ENCODE measurements at regions of chr2 and their contacts with region 1.

Region 1: GRCh38 chr2:64750817-64751285 is 97.1 kb upstream of the SERTAD2 start:
- DNase-seq: peak; percentile 98 to 99
- H3K4me3 ChIP-seq: peak overlapping the region; percentile 75
- H3K27ac ChIP-seq: peak overlapping the region; percentile 51
- H3K4me1 ChIP-seq: peaks cover 38% of the 10 kb centered on the region
- H3K27me3 ChIP-seq: no peaks in the 10 kb centered on the region
- CTCF ChIP-seq: no peak

Region 2: DNA sequence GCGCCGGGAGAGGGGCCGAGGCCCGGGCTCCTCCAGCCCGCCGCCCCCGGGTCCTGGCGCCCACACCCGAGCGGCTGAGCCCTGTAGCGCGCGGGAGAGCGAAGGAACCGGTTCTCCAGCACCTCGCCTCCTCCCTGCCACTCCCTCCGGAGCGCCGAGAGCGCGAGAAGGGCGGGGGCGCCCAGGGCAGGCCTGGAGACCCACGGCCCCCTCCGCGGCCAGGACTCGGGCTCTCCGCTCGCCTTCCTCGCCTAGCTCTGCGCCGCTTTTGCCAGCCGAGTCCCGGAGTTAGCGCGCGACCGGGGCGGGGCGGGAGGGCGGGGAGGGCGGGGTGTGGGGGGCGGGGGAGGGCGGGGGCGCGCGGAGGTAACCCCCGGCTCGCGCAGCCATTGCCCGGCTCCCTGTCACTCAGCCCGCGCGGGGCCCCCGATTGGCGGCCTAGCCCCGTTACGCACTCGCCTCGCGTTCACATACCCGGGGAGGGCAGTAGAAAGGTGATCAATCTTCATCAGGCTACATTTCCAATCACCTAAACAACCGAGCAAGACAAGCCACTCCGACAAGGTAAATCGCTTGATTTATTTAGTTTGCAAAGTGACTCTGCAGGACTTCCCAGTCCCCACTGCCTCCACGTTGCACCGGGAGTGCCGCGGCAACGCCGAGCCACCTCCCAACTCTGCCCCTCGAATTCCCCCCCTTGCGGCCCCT is 1700.4 kb before region 1 on chr2 and contains the start of gene OTX1:
- CTCF ChIA-PET with region 1: no interaction called
- POLR2A ChIA-PET with region 1: no interaction called
- intact Hi-C with region 1: loop called (anchors 2 kb)
- DNase-seq: peak; percentile 77 to 93
- H3K4me3 ChIP-seq: peak within 1 kb of the TSS; percentile 100
- H3K27ac ChIP-seq: peak within 1 kb of the TSS; percentile 28
- H3K4me1 ChIP-seq: 0 out of 2 replicates have a peak, but pooled peaks cover 6% of the 10 kb centered on the region
- H3K27me3 ChIP-seq: no peaks in the 10 kb centered on the region
- CTCF ChIP-seq: no peak
- total RNA-seq, gene OTX1: 6.8 and 7.0 TPM in 2 replicates

Region 3: DNA sequence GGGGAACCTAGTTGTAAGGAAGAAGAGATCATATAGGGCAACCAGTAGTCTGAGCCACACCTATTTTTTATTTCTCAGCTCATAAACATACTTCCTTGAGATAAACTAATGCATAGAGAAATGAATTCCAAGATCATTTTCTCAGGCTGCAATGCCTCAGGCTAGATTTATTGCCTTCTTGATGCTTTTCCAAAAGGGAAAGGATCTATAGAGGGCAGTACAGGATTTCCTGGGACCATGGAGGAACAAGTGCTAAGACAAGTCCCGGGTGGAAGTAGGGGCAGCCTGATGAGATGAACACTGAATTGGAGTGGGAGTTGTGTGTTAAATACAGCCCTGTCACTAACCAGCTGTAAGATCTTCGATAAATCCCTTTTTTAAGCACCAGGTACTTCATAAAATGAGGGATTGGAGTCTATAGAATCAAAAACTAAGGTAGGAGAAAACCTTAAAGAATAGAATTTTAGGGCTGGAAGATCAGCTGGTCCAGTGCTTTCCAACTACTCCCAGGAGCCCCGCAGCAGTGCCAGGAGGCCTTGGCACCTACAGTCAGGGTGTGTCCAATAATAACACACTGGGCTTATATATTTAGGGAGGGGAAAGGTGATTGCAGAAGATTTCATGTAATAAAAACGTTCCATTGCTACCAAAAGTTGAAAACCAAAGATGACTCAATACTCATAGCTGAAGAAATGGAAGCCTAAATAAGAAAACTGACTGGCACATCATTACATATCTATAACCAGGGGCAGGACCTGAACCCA is 155.3 kb before region 1 on chr2:
- CTCF ChIA-PET with region 1: no interaction called
- POLR2A ChIA-PET with region 1: interaction called, 25 read pairs
- intact Hi-C with region 1: no loop called
- DNase-seq: peak in 1 of 2 experiments; percentile 55
- H3K4me3 ChIP-seq: no peak overlapping the region
- H3K27ac ChIP-seq: 0 out of 2 replicates have a peak overlapping the region, but pooled peaks have one; percentile 44
- H3K4me1 ChIP-seq: peaks cover 32% of the 10 kb centered on the region
- H3K27me3 ChIP-seq: no peaks in the 10 kb centered on the region
- CTCF ChIP-seq: no peak; the same call in 1 of the 2 replicates

Region 4: GRCh38 chr2:64653349-64654062 is 97.3 kb before region 1 on chr2 and contains the start of gene SERTAD2:
- CTCF ChIA-PET with region 1: interaction called, 5 read pairs
- POLR2A ChIA-PET with region 1: interaction called, 79 read pairs
- intact Hi-C with region 1: loop called (anchors 1 kb)
- DNase-seq: peak; percentile 70 to 90
- H3K4me3 ChIP-seq: peak within 1 kb of the TSS; percentile 98
- H3K27ac ChIP-seq: peak within 1 kb of the TSS; percentile 87
- H3K4me1 ChIP-seq: peaks cover 56% of the 10 kb centered on the region
- H3K27me3 ChIP-seq: no peaks in the 10 kb centered on the region
- CTCF ChIP-seq: peak; percentile 41; the same call in 1 of the 2 replicates
- total RNA-seq, gene SERTAD2: 27.3 and 31.4 TPM in 2 replicates

Region 5: GRCh38 chr2:64767670-64768468 is 17.0 kb after region 1 on chr2:
- CTCF ChIA-PET with region 1: interaction called, 11 read pairs
- POLR2A ChIA-PET with region 1: interaction called, 5 read pairs
- intact Hi-C with region 1: loop called (anchors 1 kb)
- DNase-seq: peak; percentile 84 to 89
- H3K4me3 ChIP-seq: peak overlapping the region; percentile 66
- H3K27ac ChIP-seq: peak overlapping the region; percentile 84
- H3K4me1 ChIP-seq: peaks cover 45% of the 10 kb centered on the region
- H3K27me3 ChIP-seq: no peaks in the 10 kb centered on the region
- CTCF ChIP-seq: no peak

Region 6: DNA sequence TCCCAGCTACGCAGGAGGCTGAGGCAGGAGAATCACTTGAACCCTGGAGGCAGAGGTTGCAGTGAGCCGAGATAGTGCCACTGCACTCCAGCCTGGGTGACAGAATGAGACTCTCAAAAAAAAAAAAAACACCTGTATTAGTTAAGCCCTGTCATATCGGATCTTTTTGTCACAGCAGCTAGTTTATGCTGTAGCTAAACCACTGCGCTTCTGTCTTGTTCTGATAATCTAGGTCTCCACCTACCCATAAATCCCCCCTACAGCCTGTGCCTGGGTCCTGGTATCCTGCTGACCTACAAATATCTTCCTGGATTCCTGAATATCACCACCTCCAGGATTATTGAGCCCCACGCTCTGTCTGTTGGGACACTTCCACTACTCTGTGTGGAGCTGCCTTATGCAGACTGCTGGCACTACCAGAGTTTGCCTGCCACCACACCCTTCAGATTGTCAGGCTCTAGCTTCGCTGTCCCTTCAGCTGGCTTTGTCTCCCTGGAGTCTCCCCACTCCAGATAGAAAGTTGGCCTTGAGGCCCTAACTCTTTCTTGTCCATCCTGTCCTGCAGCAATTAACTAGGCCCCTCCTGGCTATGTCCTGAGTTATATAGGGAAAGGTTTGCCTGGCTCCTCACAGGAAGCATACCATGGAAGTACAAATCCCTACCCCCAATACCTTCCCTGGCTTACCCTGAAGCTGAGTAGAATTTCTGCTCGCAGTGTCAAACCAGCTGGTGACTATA is 38.8 kb after region 1 on chr2:
- CTCF ChIA-PET with region 1: interaction called, 12 read pairs
- POLR2A ChIA-PET with region 1: interaction called, 10 read pairs
- intact Hi-C with region 1: no loop called
- DNase-seq: no peak
- H3K4me3 ChIP-seq: peak overlapping the region; percentile 22; the same call in 1 of the 2 replicates
- H3K27ac ChIP-seq: peak overlapping the region; percentile 56
- H3K4me1 ChIP-seq: peaks cover 92% of the 10 kb centered on the region
- H3K27me3 ChIP-seq: no peaks in the 10 kb centered on the region
- CTCF ChIP-seq: no peak

Region 7: DNA sequence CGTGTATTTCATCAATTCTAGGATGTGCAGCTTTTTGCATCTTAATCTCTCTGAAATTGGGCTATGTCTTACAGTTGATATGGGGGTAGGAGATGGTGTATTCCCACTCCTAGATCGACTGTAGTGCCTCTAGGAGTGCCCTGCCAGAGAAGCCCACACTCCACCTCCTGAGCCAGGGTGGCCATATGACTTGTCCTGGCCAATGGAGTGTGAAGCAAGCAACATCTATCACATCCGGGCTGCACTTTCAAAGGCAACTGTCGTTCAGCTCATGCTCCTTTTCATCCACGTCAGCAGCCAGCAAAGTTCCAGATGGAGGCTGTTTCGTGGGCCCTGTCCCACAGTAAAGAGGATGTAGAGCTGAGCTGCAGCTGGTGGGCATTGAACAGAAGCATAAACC is 89.0 kb after region 1 on chr2:
- CTCF ChIA-PET with region 1: interaction called, 16 read pairs
- POLR2A ChIA-PET with region 1: interaction called, 14 read pairs
- intact Hi-C with region 1: loop called (anchors 1 kb)
- DNase-seq: no peak
- H3K4me3 ChIP-seq: no peak overlapping the region
- H3K27ac ChIP-seq: peak overlapping the region; percentile 87
- H3K4me1 ChIP-seq: peaks cover 59% of the 10 kb centered on the region
- H3K27me3 ChIP-seq: no peaks in the 10 kb centered on the region
- CTCF ChIP-seq: no peak

Region 8: GRCh38 chr2:64850642-64851041 is 99.8 kb after region 1 on chr2:
- CTCF ChIA-PET with region 1: no interaction called
- POLR2A ChIA-PET with region 1: no interaction called
- intact Hi-C with region 1: no loop called
- DNase-seq: no peak
- H3K4me3 ChIP-seq: no peak overlapping the region
- H3K27ac ChIP-seq: no peak overlapping the region
- H3K4me1 ChIP-seq: peaks cover 16% of the 10 kb centered on the region
- H3K27me3 ChIP-seq: no peaks in the 10 kb centered on the region
- CTCF ChIP-seq: no peak

Measured in PC-9 (cell line).